ENCODE measurements at regions of chr2 and their contacts with region 1.

Region 1: GRCh38 chr2:11681722-11682589 is 12.0 kb upstream of the NTSR2 start:
- DNase-seq: peak; percentile 73 to 81
- H3K4me3 ChIP-seq: no peak overlapping the region
- H3K4me3 Mint-ChIP-seq: no peak overlapping the region
- H3K27ac Mint-ChIP-seq: no peak overlapping the region
- H3K4me1 ChIP-seq: no peaks in the 10 kb centered on the region
- H3K4me1 Mint-ChIP-seq: peaks cover 6% of the 10 kb centered on the region
- H3K27me3 ChIP-seq: no peaks in the 10 kb centered on the region
- H3K27me3 Mint-ChIP-seq: peaks cover 10% of the 10 kb centered on the region
- CTCF ChIP-seq: peak; percentile 92 to 98

Region 2: GRCh38 chr2:11417946-11418585 is 263.9 kb before region 1 on chr2:
- CTCF ChIA-PET with region 1: no interaction called
- POLR2A ChIA-PET with region 1: no interaction called
- intact Hi-C with region 1: loop called (anchors 2 kb)
- DNase-seq: peak; percentile 63 to 77
- H3K4me3 ChIP-seq: no peak overlapping the region
- H3K4me3 Mint-ChIP-seq: no peak overlapping the region
- H3K27ac Mint-ChIP-seq: no peak overlapping the region
- H3K4me1 ChIP-seq: no peaks in the 10 kb centered on the region
- H3K4me1 Mint-ChIP-seq: no peaks in the 10 kb centered on the region
- H3K27me3 ChIP-seq: no peaks in the 10 kb centered on the region
- H3K27me3 Mint-ChIP-seq: no peaks in the 10 kb centered on the region
- CTCF ChIP-seq: peak; percentile 84 to 85

Region 3: DNA sequence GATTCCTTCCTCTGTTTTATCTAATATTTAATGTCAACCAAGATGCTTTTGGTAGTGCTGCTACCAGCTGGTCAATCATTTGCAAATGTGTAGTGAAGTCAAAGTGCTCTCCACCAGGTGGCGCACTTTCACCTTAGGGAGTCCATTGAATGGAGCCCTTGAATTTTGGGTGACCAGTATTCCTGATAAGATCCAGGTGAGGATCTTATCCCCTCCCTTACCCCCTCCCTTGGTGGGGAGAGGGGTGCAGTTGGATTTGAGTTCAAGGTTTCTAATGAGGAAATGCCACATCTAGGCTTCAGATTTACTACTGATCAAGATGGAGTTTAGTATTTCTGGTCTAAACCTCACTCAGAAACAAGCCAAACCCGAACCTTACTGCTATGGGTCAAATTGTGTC is 204.0 kb before region 1 on chr2:
- CTCF ChIA-PET with region 1: interaction called, 5 read pairs
- POLR2A ChIA-PET with region 1: no interaction called
- intact Hi-C with region 1: loop called (anchors 1 kb)
- DNase-seq: peak; percentile 85 to 86
- H3K4me3 ChIP-seq: no peak overlapping the region
- H3K4me3 Mint-ChIP-seq: no peak overlapping the region
- H3K27ac Mint-ChIP-seq: no peak overlapping the region
- H3K4me1 ChIP-seq: no peaks in the 10 kb centered on the region
- H3K4me1 Mint-ChIP-seq: no peaks in the 10 kb centered on the region
- H3K27me3 ChIP-seq: no peaks in the 10 kb centered on the region
- H3K27me3 Mint-ChIP-seq: peaks cover 6% of the 10 kb centered on the region
- CTCF ChIP-seq: peak; percentile 84 to 94

Region 4: DNA sequence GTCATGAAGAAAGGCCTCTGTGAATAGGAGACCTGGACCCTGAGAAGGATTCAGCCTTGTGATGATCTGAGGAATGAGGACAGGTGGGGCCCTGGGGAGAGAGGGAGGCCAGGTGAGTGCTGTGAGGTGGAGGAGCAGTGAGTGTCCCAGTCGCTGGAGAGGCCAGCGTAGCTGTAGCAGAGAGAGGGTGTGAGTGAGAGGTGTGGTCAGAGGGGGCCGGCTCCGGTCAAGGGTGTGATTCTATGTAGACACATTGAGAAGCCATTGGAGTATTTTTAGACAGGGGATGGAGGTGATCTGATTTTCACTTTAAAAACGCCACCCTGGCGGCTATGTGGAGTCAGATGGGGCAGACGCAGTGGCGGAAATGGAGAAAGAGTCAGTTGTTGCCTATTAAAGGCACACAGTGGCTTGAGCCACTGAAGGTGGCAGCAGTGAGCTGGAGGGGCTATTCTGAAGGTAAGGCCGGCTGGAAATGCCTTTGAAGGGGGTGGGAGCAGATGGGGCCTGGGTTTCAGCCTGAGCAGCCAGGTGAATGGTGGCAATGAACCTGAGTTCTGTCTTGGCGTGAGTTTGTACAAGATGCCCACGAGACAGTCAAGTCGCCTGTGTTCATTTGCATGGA is 92.5 kb before region 1 on chr2:
- CTCF ChIA-PET with region 1: interaction called, 3 read pairs
- POLR2A ChIA-PET with region 1: no interaction called
- intact Hi-C with region 1: loop called (anchors 1 kb)
- DNase-seq: peak in 1 of 2 experiments; percentile 15
- H3K4me3 ChIP-seq: no peak overlapping the region
- H3K4me3 Mint-ChIP-seq: no peak overlapping the region
- H3K27ac Mint-ChIP-seq: no peak overlapping the region
- H3K4me1 ChIP-seq: 0 out of 2 replicates have a peak, but pooled peaks cover 1% of the 10 kb centered on the region
- H3K4me1 Mint-ChIP-seq: no peaks in the 10 kb centered on the region
- H3K27me3 ChIP-seq: no peaks in the 10 kb centered on the region
- H3K27me3 Mint-ChIP-seq: no peaks in the 10 kb centered on the region
- CTCF ChIP-seq: peak; percentile 19 to 47

Region 5: GRCh38 chr2:11642974-11643373 is 39.0 kb before region 1 on chr2:
- CTCF ChIA-PET with region 1: no interaction called
- POLR2A ChIA-PET with region 1: no interaction called
- intact Hi-C with region 1: loop called (anchors 1 kb)
- DNase-seq: no peak
- H3K4me3 ChIP-seq: no peak overlapping the region
- H3K4me3 Mint-ChIP-seq: no peak overlapping the region
- H3K27ac Mint-ChIP-seq: no peak overlapping the region
- H3K4me1 ChIP-seq: no peaks in the 10 kb centered on the region
- H3K4me1 Mint-ChIP-seq: no peaks in the 10 kb centered on the region
- H3K27me3 ChIP-seq: no peaks in the 10 kb centered on the region; the same call in none of the 2 replicates
- H3K27me3 Mint-ChIP-seq: peaks cover 16% of the 10 kb centered on the region
- CTCF ChIP-seq: no peak

Region 6: GRCh38 chr2:11726384-11726783 is 44.4 kb after region 1 on chr2:
- CTCF ChIA-PET with region 1: no interaction called
- POLR2A ChIA-PET with region 1: no interaction called
- intact Hi-C with region 1: no loop called
- DNase-seq: no peak
- H3K4me3 ChIP-seq: no peak overlapping the region
- H3K4me3 Mint-ChIP-seq: no peak overlapping the region
- H3K27ac Mint-ChIP-seq: no peak overlapping the region
- H3K4me1 ChIP-seq: no peaks in the 10 kb centered on the region
- H3K4me1 Mint-ChIP-seq: no peaks in the 10 kb centered on the region
- H3K27me3 ChIP-seq: no peaks in the 10 kb centered on the region; the same call in 1 of the 2 replicates
- H3K27me3 Mint-ChIP-seq: peaks cover 20% of the 10 kb centered on the region
- CTCF ChIP-seq: no peak